Astrocyte of the cerebellum (primary cell): ENCODE measurements at regions of chr12 and their contacts with region 1.

Region 1: DNA sequence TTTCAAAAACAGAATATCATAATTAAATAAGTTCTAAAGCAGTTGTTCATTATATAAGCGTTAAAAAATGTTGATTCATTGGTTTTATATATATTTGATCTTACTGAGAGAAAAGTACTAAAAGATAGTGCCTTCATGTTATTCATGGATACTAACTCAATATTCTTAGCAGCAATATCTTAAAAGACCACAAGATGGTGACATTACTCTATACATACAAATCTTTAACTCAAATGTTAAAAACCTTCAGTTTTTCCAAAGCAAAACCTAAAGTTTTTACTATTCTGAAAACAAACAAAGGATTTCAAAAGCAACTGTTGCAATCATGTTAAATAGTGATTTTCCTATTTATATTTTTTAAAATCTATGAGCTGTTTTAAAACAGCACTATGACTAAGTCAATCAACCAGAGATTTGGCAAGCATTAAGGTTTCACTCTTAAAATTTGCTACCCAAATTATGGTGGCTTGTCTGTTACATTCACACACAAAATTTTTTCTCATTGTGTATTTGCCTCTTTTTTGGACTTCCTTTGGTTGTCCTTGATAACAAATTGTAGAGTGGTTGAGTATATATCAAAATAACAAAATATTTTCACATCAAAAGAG is 50.1 kb upstream of the RERGL start:
- DNase-seq: peak; percentile 33
- H3K4me3 ChIP-seq: no peak overlapping the region
- CTCF ChIP-seq: peak; percentile 18

Region 2: GRCh38 chr12:18183141-18183540 is 43.0 kb after region 1 on chr12:
- in situ Hi-C with region 1: no loop called
- DNase-seq: no peak
- H3K4me3 ChIP-seq: no peak overlapping the region
- CTCF ChIP-seq: no peak

Region 3: GRCh38 chr12:18224745-18225144 is 84.7 kb after region 1 on chr12:
- in situ Hi-C with region 1: loop called (anchors 5 kb)
- DNase-seq: peak; percentile 43
- H3K4me3 ChIP-seq: no peak overlapping the region
- CTCF ChIP-seq: peak; percentile 49